ENCODE measurements at regions of chr2 and their contacts with region 1.

Region 1: GRCh38 chr2:105749583-105750400 is 5.1 kb downstream of the NCK2 start:
- DNase-seq: no peak
- H3K4me3 Mint-ChIP-seq: no peak overlapping the region
- H3K27ac Mint-ChIP-seq: no peak overlapping the region
- H3K4me1 Mint-ChIP-seq: peaks cover 75% of the 10 kb centered on the region
- H3K27me3 Mint-ChIP-seq: no peaks in the 10 kb centered on the region
- CTCF ChIP-seq: no peak

Region 2: GRCh38 chr2:105682401-105682800 is 67.4 kb before region 1 on chr2:
- CTCF ChIA-PET with region 1: no interaction called
- intact Hi-C with region 1: no loop called
- DNase-seq: no peak
- H3K4me3 Mint-ChIP-seq: no peak overlapping the region
- H3K27ac Mint-ChIP-seq: no peak overlapping the region
- H3K4me1 Mint-ChIP-seq: no peaks in the 10 kb centered on the region
- H3K27me3 Mint-ChIP-seq: peaks cover 51% of the 10 kb centered on the region
- CTCF ChIP-seq: no peak

Region 3: GRCh38 chr2:105969555-105969954 is 219.8 kb after region 1 on chr2:
- CTCF ChIA-PET with region 1: no interaction called
- intact Hi-C with region 1: loop called (anchors 2 kb)
- DNase-seq: peak; percentile 35
- H3K4me3 Mint-ChIP-seq: no peak overlapping the region
- H3K27ac Mint-ChIP-seq: no peak overlapping the region
- H3K4me1 Mint-ChIP-seq: no peaks in the 10 kb centered on the region
- H3K27me3 Mint-ChIP-seq: no peaks in the 10 kb centered on the region
- CTCF ChIP-seq: no peak

Measured in Calu3 (cell line).